GM12878 (cell line): ENCODE measurements at regions of chr16 and their contacts with region 1.

Region 1: GRCh38 chr16:20866145-20866772 is 33.9 kb downstream of the DCUN1D3 start:
- DNase-seq: no peak
- ATAC-seq: peak; percentile 44
- H3K4me3 ChIP-seq: no peak overlapping the region
- H3K27ac ChIP-seq: peak overlapping the region; percentile 98
- H3K4me1 ChIP-seq: peaks cover 28% of the 10 kb centered on the region
- H3K27me3 ChIP-seq: no peaks in the 10 kb centered on the region
- CTCF ChIP-seq: no peak
- EP300 ChIP-seq: peak in 1 of 2 experiments; percentile 8; a peak in 1 of 4 replicates
- POLR2A ChIP-seq: no peak
- RAD21 ChIP-seq: no peak

Region 2: GRCh38 chr16:20637247-20637646 is 229.0 kb before region 1 on chr16:
- CTCF ChIA-PET with region 1: no interaction called
- POLR2A ChIA-PET with region 1: no interaction called
- RAD21 ChIA-PET with region 1: no interaction called
- SMC1A ChIA-PET with region 1: no interaction called
- in situ Hi-C with region 1: no loop called
- intact Hi-C with region 1: no loop called
- DNase-seq: no peak
- ATAC-seq: no peak
- H3K4me3 ChIP-seq: no peak overlapping the region
- H3K27ac ChIP-seq: no peak overlapping the region
- H3K4me1 ChIP-seq: no peaks in the 10 kb centered on the region
- H3K27me3 ChIP-seq: no peaks in the 10 kb centered on the region
- CTCF ChIP-seq: no peak
- EP300 ChIP-seq: no peak
- POLR2A ChIP-seq: no peak
- RAD21 ChIP-seq: no peak

Region 3: GRCh38 chr16:20879175-20880040 is 13.1 kb after region 1 on chr16:
- CTCF ChIA-PET with region 1: interaction called, 51 read pairs
- POLR2A ChIA-PET with region 1: interaction called, 44 read pairs
- RAD21 ChIA-PET with region 1: interaction called, 48 read pairs
- SMC1A ChIA-PET with region 1: interaction called, 83 read pairs
- in situ Hi-C with region 1: no loop called
- intact Hi-C with region 1: no loop called
- DNase-seq: peak; percentile 71
- ATAC-seq: peak; percentile 70
- H3K4me3 ChIP-seq: peak overlapping the region; percentile 17; the same call in 1 of the 2 replicates
- H3K27ac ChIP-seq: peak overlapping the region; percentile 60
- H3K4me1 ChIP-seq: peaks cover 32% of the 10 kb centered on the region
- H3K27me3 ChIP-seq: no peaks in the 10 kb centered on the region
- CTCF ChIP-seq: no peak
- EP300 ChIP-seq: 0 out of 4 replicates have a peak, but pooled peaks have one; percentile 4 to 50
- POLR2A ChIP-seq: no peak
- RAD21 ChIP-seq: no peak